ENCODE measurements at regions of chr3 and their contacts with region 1.

Region 1: GRCh38 chr3:184362668-184363540 is 1.4 kb downstream of the POLR2H start:
- DNase-seq: peak; percentile 96
- H3K4me3 Mint-ChIP-seq: peak overlapping the region; percentile 100
- H3K27ac Mint-ChIP-seq: peak overlapping the region; percentile 99
- H3K4me1 Mint-ChIP-seq: peaks cover 21% of the 10 kb centered on the region
- H3K27me3 Mint-ChIP-seq: peaks cover 10% of the 10 kb centered on the region

Region 2: GRCh38 chr3:183884427-183885296 is 478.2 kb before region 1 on chr3 and contains the start of gene PARL:
- intact Hi-C with region 1: loop called (anchors 2 kb)
- DNase-seq: peak; percentile 93
- H3K4me3 Mint-ChIP-seq: peak within 1 kb of the TSS; percentile 98
- H3K27ac Mint-ChIP-seq: peak within 1 kb of the TSS; percentile 99
- H3K4me1 Mint-ChIP-seq: peaks cover 35% of the 10 kb centered on the region
- H3K27me3 Mint-ChIP-seq: no peaks in the 10 kb centered on the region
- total RNA-seq, gene PARL: 93.7 and 98.2 TPM in 2 replicates

Region 3: GRCh38 chr3:184174646-184175492 is 188.0 kb before region 1 on chr3 and contains the start of gene AP2M1:
- intact Hi-C with region 1: loop called (anchors 1 kb)
- DNase-seq: peak; percentile 99
- H3K4me3 Mint-ChIP-seq: peak within 1 kb of the TSS; percentile 95
- H3K27ac Mint-ChIP-seq: peak within 1 kb of the TSS; percentile 85
- H3K4me1 Mint-ChIP-seq: peaks cover 28% of the 10 kb centered on the region
- H3K27me3 Mint-ChIP-seq: no peaks in the 10 kb centered on the region
- total RNA-seq, gene AP2M1: 235 and 238 TPM in 2 replicates

Region 4: DNA sequence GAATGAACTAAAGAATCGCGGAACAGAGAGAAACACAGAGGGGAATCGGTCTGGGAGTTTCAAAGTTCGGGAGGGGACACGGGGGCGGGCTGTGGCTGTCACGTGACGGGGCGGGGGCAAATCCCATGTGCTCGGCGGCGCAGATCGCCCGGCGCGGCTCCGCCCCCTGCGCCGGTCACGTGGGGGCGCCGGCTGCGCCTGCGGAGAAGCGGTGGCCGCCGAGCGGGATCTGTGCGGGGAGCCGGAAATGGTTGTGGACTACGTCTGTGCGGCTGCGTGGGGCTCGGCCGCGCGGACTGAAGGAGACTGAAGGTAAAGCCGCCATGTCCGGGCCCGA is 48.6 kb before region 1 on chr3 and contains the start of gene EIF4G1:
- intact Hi-C with region 1: loop called (anchors 1 kb)
- DNase-seq: peak; percentile 92
- H3K4me3 Mint-ChIP-seq: peak within 1 kb of the TSS; percentile 88
- H3K27ac Mint-ChIP-seq: peak within 1 kb of the TSS; percentile 93
- H3K4me1 Mint-ChIP-seq: peaks cover 29% of the 10 kb centered on the region
- H3K27me3 Mint-ChIP-seq: no peaks in the 10 kb centered on the region
- total RNA-seq, gene EIF4G1: 657 and 706 TPM in 2 replicates

Region 5: DNA sequence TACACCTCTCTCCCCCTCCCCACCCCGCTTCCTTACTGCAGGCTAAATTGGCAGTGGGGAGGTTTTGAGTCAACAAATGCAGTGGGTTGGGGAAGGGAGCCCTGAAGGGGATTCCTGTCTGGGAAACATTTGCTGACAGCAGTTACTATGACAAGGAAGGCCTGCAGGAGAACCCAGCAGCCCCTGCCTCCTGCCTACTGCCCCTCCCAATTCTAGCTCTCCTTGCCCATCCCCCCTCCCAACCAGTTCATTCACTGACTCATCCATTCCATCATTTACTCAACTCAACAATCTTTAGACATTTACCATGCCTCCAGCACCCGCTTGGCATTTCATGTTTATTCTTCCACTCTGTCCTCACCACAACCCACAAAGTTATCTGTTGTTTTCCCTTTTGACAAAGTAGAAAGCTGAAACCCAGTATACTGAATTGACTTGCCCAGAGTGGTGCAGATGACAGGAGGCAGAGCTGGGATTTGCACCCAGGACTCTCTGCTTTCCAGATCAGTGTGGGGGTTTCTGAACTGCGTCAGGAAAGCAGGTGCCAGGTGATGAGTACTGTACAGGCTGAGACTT is 273.9 kb after region 1 on chr3:
- intact Hi-C with region 1: loop called (anchors 2 kb)
- DNase-seq: peak; percentile 11
- H3K4me3 Mint-ChIP-seq: no peak overlapping the region
- H3K27ac Mint-ChIP-seq: no peak overlapping the region
- H3K4me1 Mint-ChIP-seq: no peaks in the 10 kb centered on the region
- H3K27me3 Mint-ChIP-seq: peaks cover 4% of the 10 kb centered on the region

Region 6: DNA sequence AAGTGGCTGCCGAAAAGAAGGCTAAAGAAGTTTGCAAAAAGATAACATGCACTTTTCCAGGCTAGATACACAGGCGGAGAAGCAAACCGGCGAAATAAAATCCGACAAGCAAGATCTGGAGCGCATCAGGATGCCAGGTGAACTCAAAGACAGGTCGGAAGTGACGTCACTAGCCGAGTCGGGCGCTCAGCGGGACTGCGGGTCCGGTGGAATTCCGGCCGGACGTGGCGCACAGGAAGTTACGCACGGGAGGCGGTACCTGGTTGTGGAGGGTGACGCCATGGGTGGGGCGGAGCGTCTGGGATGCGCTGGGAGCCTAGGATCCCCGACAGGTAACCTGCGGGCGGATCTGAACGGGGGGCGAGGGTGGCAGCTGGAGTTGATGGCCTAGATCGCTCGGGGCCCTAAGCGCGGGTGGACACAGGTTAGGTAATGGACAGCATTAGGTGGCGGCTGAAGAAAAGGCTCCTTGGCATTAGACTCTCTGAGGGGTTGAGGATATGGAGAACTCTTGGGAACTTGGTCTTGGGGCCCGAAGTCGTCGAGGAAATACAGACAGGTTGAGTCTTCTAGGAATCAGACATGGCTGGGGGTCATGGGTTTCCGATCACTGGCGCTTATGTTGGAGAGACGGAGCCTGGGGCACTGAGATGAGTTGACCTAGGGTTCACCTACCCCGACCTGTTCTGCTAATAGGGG is 919.9 kb after region 1 on chr3:
- intact Hi-C with region 1: loop called (anchors 2 kb)
- DNase-seq: peak; percentile 91
- H3K4me3 Mint-ChIP-seq: peak overlapping the region; percentile 96
- H3K27ac Mint-ChIP-seq: peak overlapping the region; percentile 80
- H3K4me1 Mint-ChIP-seq: peaks cover 19% of the 10 kb centered on the region
- H3K27me3 Mint-ChIP-seq: peaks cover 3% of the 10 kb centered on the region

Measured in activated T-helper 1 cell treated with anti-CD3 and anti-CD28 coated beads, Interleukin-12 subunit alpha, Interleukin-12 subunit beta, Interleukin-2, Interleukin-4 antibody, amounts not matched to agents 30 ng/mL and 10 ng/mL and 1 ng/mL, durations not matched to agents 14 hours and 24 hours and 36 hours (primary cell).